Naive thymus-derived CD4-positive, alpha-beta T cell (primary cell): ENCODE measurements at regions of chr6 and their contacts with region 1.

Region 1: DNA sequence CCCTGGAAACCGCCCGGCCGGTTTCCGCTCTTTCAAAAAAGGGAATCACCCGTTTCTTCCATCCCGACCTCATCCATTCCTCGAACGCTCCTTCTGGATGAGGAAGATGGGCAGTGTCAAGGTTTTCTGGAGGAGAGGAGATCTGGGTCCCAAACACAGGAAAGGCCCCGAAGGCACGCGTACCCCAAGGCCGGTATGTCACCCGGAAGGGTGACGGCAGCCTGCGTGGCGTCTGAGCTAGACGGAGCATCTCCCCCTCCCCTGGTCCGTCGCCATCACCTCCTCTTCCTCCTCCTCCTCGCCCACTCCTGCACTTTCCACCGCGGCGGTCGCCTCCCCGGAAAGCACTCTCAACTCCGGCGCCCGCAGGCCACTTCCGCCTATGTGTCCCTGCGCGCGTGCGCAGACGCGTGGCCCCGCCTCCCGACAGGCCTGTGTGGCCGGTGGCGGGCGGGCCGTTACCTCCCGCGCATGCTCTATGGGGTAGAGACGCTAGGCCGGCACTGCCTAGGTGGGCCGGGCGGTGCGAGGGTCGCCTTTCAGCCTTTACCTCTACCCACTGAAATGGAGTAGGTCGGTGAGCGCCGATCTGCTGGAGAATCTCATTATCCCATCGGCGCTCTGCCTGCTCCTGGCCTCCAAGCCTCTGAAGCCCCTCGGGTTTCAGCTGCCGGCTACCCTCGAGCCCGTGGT is at the start of gene SLC35B3:
- DNase-seq: peak; percentile 95 to 100 (median 98)
- ATAC-seq: peak; percentile 95
- H3K4me3 ChIP-seq: peak within 1 kb of the TSS; percentile 99
- H3K4me3 Mint-ChIP-seq: peak within 1 kb of the TSS; percentile 92 to 97 (median 96)
- H3K27ac ChIP-seq: peak within 1 kb of the TSS; percentile 96
- H3K27ac Mint-ChIP-seq: peak within 1 kb of the TSS; percentile 93 to 99 (median 98)
- H3K4me1 ChIP-seq: peaks cover 13 to 24% of the 10 kb centered on the region in 2 donors
- H3K4me1 Mint-ChIP-seq: peaks cover 17 to 57% (median 48%) of the 10 kb centered on the region in 7 donors
- H3K27me3 ChIP-seq: no peaks in the 10 kb centered on the region
- H3K27me3 Mint-ChIP-seq: peaks cover 0 to 3% (median 0%) of the 10 kb centered on the region in 5 donors
- total RNA-seq, gene SLC35B3: 5.5 to 18.5 (median 11.1) TPM

Region 2: DNA sequence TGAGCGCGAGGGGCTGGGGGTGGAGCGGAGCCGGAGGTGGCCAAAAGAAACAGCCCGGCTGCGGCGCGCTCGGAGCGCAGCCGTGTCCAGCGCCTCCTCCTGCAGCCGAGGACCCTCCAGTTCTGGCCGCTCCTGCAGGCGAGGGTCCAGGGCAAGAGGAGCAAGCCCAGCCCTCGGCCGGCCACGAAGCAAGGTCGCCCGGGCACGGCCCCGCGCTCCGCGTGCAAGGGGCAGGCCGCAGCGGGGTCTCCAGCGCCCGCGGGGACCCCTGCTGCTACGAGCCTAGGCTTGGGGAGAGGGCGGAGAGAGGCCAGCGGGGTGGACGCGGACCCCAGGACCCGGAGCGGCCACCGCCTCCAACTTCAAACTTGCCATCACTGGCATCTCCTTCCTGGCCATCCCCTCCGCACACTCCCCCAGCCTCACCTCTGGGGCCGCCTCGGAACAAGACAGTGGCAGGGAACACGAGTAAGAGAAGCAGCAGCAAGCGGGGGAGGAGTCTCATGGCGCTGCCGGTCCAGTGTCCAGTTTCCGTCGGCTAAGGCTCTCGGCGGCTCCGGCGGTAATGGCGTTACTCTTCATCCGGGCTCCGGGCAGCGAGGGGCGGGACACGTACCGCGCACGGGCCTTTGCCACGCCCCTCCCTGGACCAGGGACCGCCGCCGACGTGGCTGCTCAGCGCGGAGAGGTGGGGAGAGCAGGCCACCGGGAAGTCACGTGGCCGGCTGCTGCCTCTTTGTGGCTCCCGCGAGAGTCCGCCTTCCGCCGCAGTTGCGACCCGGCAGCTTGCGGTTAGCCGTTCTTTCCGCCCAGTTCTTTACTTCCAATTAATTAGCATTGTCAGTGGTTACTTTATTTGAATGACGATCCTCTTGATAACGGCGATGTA is 1122.4 kb before region 1 on chr6 and contains the start of gene SSR1:
- CTCF ChIA-PET with region 1: no interaction called
- POLR2A ChIA-PET with region 1: no interaction called
- intact Hi-C with region 1: loop called in 1 of 2 experiments (anchors 2 kb)
- DNase-seq: peak; percentile 76 to 97 (median 84)
- ATAC-seq: peak; percentile 99
- H3K4me3 ChIP-seq: peak within 1 kb of the TSS; percentile 66
- H3K4me3 Mint-ChIP-seq: peak within 1 kb of the TSS; percentile 83 to 99 (median 94)
- H3K27ac ChIP-seq: peak within 1 kb of the TSS; percentile 76
- H3K27ac Mint-ChIP-seq: peak within 1 kb of the TSS; percentile 87 to 93 (median 92)
- H3K4me1 ChIP-seq: peaks cover 6 to 27% of the 10 kb centered on the region in 2 donors
- H3K4me1 Mint-ChIP-seq: peaks cover 31 to 65% (median 50%) of the 10 kb centered on the region in 7 donors
- H3K27me3 ChIP-seq: no peaks in the 10 kb centered on the region
- H3K27me3 Mint-ChIP-seq: no peaks in the 10 kb centered on the region
- total RNA-seq, gene SSR1: 75.0 to 178 (median 127) TPM

Region 3: GRCh38 chr6:7725849-7726415 is 709.4 kb before region 1 on chr6 and contains the start of gene BMP6:
- CTCF ChIA-PET with region 1: no interaction called
- POLR2A ChIA-PET with region 1: no interaction called
- intact Hi-C with region 1: loop called (anchors 5 to 10 kb)
- DNase-seq: peak in 7 of 9 donors; percentile 10 to 73 (median 24)
- ATAC-seq: peak; percentile 79
- H3K4me3 ChIP-seq: peak within 1 kb of the TSS; percentile 20
- H3K4me3 Mint-ChIP-seq: peak within 1 kb of the TSS; percentile 58 to 90 (median 79)
- H3K27ac ChIP-seq: no peak within 1 kb of the TSS
- H3K27ac Mint-ChIP-seq: no peak within 1 kb of the TSS
- H3K4me1 ChIP-seq: peaks cover 0 to 7% of the 10 kb centered on the region in 2 donors
- H3K4me1 Mint-ChIP-seq: peaks cover 13 to 24% (median 22%) of the 10 kb centered on the region in 7 donors
- H3K27me3 ChIP-seq: peaks cover 8 to 20% of the 10 kb centered on the region in 2 donors
- H3K27me3 Mint-ChIP-seq: peaks cover 61 to 78% (median 62%) of the 10 kb centered on the region in 5 donors
- total RNA-seq, gene BMP6: 0.37 to 0.56 TPM in 2 of 5 experiments, not detected in the others

Region 4: DNA sequence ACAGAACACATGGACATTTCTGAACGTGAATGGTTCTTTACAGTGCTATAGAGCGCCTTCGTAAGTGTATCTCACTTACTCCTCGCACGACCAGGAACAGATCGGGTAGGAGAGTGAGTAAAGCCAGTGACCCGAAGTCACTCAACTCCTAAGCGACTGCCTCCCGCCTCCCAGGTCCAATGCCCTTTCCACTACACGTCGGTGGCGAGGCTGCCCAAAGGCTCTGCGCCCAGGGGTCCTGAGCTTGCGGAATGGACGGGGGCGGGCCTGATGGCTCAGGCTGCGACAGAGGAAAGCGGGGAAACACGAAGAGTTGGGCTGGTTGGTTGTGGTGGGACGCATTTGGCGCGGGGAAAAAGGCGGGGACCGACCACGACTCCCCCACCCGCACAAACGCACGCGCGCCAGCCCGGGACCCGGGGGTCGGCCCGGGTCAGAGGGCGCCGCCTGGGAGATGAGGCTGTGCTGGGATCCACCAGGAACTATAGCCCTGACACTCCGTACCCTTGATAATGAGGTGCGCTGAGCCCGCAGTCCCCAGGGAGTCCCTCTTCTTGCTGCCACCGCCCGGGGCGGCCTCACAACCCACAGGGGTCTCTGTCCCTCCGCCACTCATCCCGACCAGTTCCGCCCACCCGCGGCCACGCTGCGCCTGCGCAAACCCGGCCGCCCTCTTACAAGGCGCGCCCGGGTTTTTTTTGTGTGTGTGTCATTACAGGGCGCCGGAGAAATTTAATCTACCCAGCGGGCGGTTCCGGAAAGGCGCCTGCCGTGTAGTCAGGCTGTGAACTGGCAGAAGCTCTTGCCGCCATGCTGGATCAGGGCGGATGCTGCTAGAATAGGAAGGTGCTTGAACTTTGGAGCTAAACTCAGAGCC is 371.3 kb before region 1 on chr6 and contains the start of gene BLOC1S5:
- CTCF ChIA-PET with region 1: no interaction called
- POLR2A ChIA-PET with region 1: no interaction called
- intact Hi-C with region 1: loop called (anchors 1 kb)
- DNase-seq: peak; percentile 89 to 99 (median 97)
- ATAC-seq: peak; percentile 98
- H3K4me3 ChIP-seq: peak within 1 kb of the TSS; percentile 89
- H3K4me3 Mint-ChIP-seq: peak within 1 kb of the TSS; percentile 91 to 98 (median 95)
- H3K27ac ChIP-seq: peak within 1 kb of the TSS; percentile 92
- H3K27ac Mint-ChIP-seq: peak within 1 kb of the TSS; percentile 91 to 97 (median 95)
- H3K4me1 ChIP-seq: peaks cover 10% of the 10 kb centered on the region in 2 donors
- H3K4me1 Mint-ChIP-seq: peaks cover 9 to 38% (median 28%) of the 10 kb centered on the region in 7 donors
- H3K27me3 ChIP-seq: no peaks in the 10 kb centered on the region
- H3K27me3 Mint-ChIP-seq: no peaks in the 10 kb centered on the region
- total RNA-seq, gene BLOC1S5: 9.6 to 26.2 (median 22.6) TPM

Region 5: DNA sequence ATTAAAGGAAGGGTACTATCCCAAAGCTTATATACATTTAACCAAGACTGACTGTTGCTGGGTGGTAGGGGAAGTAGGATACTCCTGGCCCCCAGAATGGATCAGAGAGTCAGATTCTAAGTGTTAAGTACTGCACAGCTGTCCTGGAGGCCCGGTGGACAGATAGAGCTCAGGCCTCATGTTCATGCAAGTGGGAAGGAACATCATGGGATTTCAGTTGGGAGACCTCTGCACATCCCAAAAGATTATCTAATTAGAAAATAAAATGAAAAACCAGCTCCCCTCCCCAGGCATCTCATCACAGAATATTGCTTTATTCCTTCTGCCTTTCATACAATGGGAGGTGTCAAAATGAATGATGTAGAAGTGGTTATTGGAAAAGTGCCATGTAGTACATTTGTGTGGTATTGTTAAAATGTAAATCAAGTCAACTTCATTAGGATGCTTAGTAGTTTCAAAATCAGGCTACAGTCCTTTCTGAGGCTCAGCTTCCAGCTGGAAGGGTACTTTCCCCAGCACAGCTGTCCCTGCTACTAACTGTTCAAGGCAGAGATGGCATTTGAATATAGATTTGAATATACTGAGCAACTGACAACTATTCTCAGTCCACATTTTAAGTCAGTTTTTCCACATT is 82.9 kb before region 1 on chr6:
- CTCF ChIA-PET with region 1: no interaction called
- POLR2A ChIA-PET with region 1: no interaction called
- intact Hi-C with region 1: no loop called
- DNase-seq: no peak
- ATAC-seq: no peak
- H3K4me3 ChIP-seq: no peak overlapping the region
- H3K4me3 Mint-ChIP-seq: no peak overlapping the region
- H3K27ac ChIP-seq: no peak overlapping the region
- H3K27ac Mint-ChIP-seq: no peak overlapping the region
- H3K4me1 ChIP-seq: no peaks in the 10 kb centered on the region
- H3K4me1 Mint-ChIP-seq: no peaks in the 10 kb centered on the region
- H3K27me3 ChIP-seq: no peaks in the 10 kb centered on the region
- H3K27me3 Mint-ChIP-seq: peaks cover 0 to 18% (median 10%) of the 10 kb centered on the region in 5 donors

Region 6: DNA sequence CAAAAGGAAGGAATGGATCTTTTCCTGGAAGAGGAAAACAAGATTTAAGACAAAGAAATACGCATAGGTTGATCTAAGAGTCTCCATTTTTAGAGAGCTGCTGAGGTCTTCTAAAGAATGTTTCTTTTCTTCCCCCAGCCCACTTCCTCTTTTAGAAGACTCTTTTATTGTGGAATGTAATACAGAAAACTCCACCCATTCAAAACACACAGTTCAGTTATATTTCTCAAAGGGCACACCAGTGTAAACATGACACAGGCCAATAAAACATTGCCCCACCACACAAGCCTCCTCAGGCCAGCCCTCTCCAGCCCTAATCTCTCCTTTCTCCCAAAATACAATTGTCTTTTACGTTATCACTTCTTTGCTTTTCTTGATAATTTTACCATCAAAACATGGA is 42.7 kb before region 1 on chr6:
- CTCF ChIA-PET with region 1: interaction called, 5 read pairs
- POLR2A ChIA-PET with region 1: no interaction called
- intact Hi-C with region 1: loop called in 1 of 2 experiments (anchors 2 kb)
- DNase-seq: peak in 6 of 9 donors; percentile 9 to 43 (median 30)
- ATAC-seq: peak; percentile 54
- H3K4me3 ChIP-seq: no peak overlapping the region
- H3K4me3 Mint-ChIP-seq: peak overlapping the region; percentile 18 to 83 (median 70)
- H3K27ac ChIP-seq: no peak overlapping the region
- H3K27ac Mint-ChIP-seq: peak overlapping the region; percentile 39 to 86 (median 80)
- H3K4me1 ChIP-seq: peaks cover 0 to 19% of the 10 kb centered on the region in 2 donors
- H3K4me1 Mint-ChIP-seq: peaks cover 10 to 35% (median 28%) of the 10 kb centered on the region in 7 donors
- H3K27me3 ChIP-seq: no peaks in the 10 kb centered on the region
- H3K27me3 Mint-ChIP-seq: peaks cover 0 to 3% (median 0%) of the 10 kb centered on the region in 5 donors

Region 7: DNA sequence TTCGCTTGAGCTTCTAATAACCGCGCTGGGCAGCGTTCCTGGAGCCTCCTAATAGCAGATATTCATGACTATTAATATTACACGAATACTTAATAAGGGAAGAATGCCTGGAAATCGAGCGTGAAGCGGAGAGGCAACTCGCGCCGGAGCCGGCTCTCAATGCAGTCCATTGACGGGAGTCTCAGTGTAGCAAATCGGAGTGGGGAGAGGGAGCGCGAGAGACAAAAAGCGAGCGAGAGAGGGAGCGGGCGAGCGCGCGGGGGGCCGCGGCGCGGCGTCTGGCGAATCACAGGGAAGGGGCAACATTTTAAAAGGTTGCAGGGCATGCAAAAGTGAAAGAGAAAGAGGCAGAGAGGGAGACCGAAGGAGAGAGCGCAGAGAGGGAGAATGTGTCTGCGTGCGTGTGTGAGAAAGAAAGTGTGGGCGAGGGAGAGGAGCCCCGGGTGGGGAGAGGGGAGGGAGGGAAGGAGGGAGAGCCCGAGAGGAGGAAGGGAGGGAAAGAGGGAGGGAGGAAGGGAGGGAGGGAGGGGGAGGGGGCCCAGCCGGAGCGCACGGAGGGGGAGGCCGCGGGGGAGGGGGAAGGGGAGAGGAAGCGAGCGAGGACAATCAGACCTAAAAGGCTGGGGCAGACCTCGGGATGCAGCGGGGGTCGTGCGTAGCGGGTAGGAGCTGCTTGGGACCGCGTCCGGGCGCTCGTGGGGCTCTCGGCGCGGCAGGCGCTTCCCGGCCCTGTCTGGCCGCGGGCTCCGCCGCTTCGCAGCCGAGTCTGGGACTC is 1976.9 kb after region 1 on chr6:
- CTCF ChIA-PET with region 1: no interaction called
- POLR2A ChIA-PET with region 1: no interaction called
- intact Hi-C with region 1: loop called (anchors 1 to 10 kb)
- DNase-seq: peak in 7 of 9 donors; percentile 32 to 59 (median 42)
- ATAC-seq: peak; percentile 69
- H3K4me3 ChIP-seq: peak overlapping the region; percentile 68
- H3K4me3 Mint-ChIP-seq: peak overlapping the region; percentile 88 to 98 (median 96)
- H3K27ac ChIP-seq: no peak overlapping the region
- H3K27ac Mint-ChIP-seq: peak overlapping the region; percentile 56 to 91 (median 80)
- H3K4me1 ChIP-seq: peaks cover 8 to 39% of the 10 kb centered on the region in 2 donors
- H3K4me1 Mint-ChIP-seq: peaks cover 36 to 63% (median 44%) of the 10 kb centered on the region in 7 donors
- H3K27me3 ChIP-seq: peaks cover 32 to 49% of the 10 kb centered on the region in 2 donors
- H3K27me3 Mint-ChIP-seq: peaks cover 88 to 95% (median 91%) of the 10 kb centered on the region in 5 donors